ENCODE measurements at regions of chr22 and their contacts with region 1.

Region 1: DNA sequence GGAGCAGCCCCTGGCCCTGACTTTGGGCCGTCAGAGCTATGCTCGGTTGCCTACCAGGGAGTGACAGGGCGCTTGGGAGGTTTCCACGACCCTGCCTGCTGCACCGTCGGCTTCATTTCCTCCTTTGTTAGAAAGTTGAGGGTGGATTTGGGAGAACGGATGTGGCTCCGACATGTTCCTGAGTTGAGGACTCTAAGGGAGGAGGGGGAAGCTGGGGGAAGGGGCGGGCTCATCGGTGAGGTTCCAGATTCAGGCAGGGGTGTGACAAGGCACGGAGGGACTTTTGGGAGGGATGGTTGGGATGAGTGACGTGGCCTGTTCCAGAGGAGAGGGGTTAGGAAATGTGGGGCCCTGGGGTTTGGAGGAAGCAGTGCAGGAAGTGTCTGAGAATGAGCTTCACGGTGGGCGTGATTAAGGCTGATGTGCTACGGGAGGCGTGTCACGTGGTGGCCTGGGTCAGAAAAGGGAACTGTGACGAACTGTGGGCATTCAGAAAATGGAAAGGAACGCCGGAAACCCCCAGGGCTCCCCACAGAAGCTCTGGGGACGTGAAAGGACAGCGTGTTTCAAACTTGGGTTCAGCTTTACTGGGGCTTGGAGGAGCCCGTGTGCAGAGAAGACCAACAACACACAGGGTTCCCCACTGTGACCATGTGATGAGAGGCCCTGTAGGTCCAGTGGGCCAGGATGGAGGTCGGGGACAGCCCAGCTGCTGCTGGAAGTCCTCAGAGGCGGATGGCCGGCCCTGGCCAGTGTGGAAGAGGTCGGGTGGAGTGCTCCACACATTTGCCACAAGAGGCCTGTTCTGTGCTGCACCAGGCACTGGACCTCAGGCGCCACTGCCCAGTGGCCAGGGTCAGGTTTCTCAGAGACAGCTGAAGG is 2.8 kb downstream of the PARVB start:
- DNase-seq: peak; percentile 72 to 88
- ATAC-seq: peak; percentile 52 to 87 (median 74)
- H3K4me3 ChIP-seq: peak overlapping the region in 9 of 10 donors; percentile 16 to 80 (median 66)
- H3K27ac ChIP-seq: peak overlapping the region; percentile 93 to 98 (median 95)
- H3K4me1 ChIP-seq: peaks cover 16 to 91% (median 86%) of the 10 kb centered on the region in 9 donors
- H3K27me3 ChIP-seq: no peaks in the 10 kb centered on the region
- CTCF ChIP-seq: no peak

Region 2: GRCh38 chr22:43985532-43985931 is 41.3 kb before region 1 on chr22:
- intact Hi-C with region 1: no loop called
- DNase-seq: no peak
- ATAC-seq: no peak
- H3K4me3 ChIP-seq: no peak overlapping the region
- H3K27ac ChIP-seq: no peak overlapping the region
- H3K4me1 ChIP-seq: no peaks in the 10 kb centered on the region
- H3K27me3 ChIP-seq: no peaks in the 10 kb centered on the region
- CTCF ChIP-seq: no peak

Region 3: DNA sequence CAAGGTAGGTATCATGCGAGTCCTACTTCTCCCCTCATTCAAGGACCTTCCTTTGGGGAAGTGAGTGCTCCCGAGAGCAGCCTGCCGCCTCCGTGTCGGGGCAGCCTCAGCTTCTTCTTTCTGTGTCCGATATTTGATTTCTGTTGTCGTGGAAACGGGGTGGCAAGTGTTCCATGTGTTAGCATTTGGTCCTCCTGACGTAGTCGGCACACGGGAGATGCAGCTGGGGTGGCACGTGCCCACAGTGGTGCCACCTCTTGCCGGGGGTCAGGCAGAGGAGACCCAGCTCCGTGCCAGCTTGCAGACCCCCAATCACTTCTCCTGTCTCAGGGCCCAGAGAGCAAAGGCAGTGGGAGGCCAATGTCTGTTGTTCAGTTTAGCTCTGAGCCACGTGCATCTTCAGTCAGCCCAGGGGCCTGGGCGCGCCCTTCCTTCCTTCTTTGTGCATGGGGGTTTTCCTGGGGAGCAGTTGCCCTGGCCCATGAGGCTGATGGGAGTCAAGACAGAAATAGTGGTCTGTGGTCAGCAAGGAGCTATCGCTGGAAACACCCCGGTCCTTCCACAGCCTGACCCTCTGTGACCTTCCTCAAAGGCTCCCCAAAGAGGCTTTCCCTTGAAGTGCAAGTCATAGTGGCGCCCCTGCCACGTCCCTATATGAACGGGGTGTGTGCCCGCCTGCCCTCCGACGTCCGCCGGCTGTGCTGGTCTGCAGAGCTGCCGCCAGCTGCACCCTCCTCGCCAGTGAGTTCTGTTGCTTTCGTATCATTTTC is 41.7 kb after region 1 on chr22:
- intact Hi-C with region 1: loop called in 2 of 10 experiments (anchors 5 kb)
- DNase-seq: peak; percentile 30 to 37
- ATAC-seq: peak; percentile 31 to 73 (median 56)
- H3K4me3 ChIP-seq: no peak overlapping the region
- H3K27ac ChIP-seq: peak overlapping the region in 9 of 10 donors; percentile 15 to 69 (median 43)
- H3K4me1 ChIP-seq: peaks cover 0 to 49% (median 36%) of the 10 kb centered on the region in 9 donors
- H3K27me3 ChIP-seq: no peaks in the 10 kb centered on the region
- CTCF ChIP-seq: no peak

Region 4: GRCh38 chr22:44074337-44074984 is 47.6 kb after region 1 on chr22:
- intact Hi-C with region 1: loop called in 2 of 10 experiments (anchors 5 kb)
- DNase-seq: no peak
- ATAC-seq: no peak
- H3K4me3 ChIP-seq: no peak overlapping the region
- H3K27ac ChIP-seq: no peak overlapping the region
- H3K4me1 ChIP-seq: peaks cover 0 to 44% (median 23%) of the 10 kb centered on the region in 9 donors
- H3K27me3 ChIP-seq: no peaks in the 10 kb centered on the region
- CTCF ChIP-seq: no peak

Measured in heart right ventricle (tissue), 16 donors.